ENCODE measurements at regions of chr7 and their contacts with region 1.

Region 1: DNA sequence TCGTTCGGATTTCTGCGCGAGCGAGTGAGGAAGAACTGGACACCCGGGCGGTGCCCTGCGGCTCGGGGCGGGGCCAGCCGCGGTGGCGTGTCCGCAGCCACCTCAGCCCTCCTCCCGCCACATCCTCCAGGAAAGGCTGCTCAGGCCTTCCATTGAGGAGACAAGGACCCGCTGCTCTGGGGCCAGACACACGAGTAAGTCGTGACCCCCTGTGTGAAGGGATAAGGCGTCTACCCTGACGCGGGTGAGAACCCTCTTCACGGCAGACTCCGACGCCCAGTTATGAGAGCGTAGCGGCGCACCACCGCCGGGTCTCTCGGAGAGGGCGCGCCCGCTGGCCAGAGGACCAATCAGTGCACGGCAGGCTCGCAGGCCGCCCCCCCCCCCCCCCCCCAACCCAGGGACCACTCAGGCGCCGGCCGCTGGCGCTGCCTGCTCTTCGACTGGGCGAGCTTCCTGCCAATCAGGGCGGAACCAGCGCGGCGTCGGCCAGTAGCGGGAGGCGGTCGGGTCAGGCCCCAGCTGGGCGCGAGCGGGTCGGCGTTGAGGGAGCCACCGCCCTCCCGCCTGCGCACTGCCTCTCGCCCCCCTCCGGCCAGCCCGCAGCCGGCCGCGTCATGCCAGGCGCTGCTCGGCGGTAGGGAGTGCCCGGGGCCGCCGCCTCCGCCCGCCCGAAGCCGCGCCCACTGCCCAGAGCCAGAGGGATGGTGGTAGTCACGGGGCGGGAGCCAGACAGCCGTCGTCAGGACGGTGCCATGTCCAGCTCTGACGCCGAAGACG is at the start of gene KCTD7:
- DNase-seq: peak; percentile 99
- H3K4me3 ChIP-seq: peak within 1 kb of the TSS; percentile 64 to 90 (median 72)
- H3K27ac ChIP-seq: peak within 1 kb of the TSS; percentile 95 to 97 (median 96)
- H3K4me1 ChIP-seq: peaks cover 0 to 48% (median 36%) of the 10 kb centered on the region in 4 donors
- H3K27me3 ChIP-seq: no peaks in the 10 kb centered on the region
- CTCF ChIP-seq: no peak
- EP300 ChIP-seq: no peak
- POLR2A ChIP-seq: peak; percentile 98 to 99
- total RNA-seq, gene KCTD7: 15.3 to 23.3 (median 19.6) TPM

Region 2: DNA sequence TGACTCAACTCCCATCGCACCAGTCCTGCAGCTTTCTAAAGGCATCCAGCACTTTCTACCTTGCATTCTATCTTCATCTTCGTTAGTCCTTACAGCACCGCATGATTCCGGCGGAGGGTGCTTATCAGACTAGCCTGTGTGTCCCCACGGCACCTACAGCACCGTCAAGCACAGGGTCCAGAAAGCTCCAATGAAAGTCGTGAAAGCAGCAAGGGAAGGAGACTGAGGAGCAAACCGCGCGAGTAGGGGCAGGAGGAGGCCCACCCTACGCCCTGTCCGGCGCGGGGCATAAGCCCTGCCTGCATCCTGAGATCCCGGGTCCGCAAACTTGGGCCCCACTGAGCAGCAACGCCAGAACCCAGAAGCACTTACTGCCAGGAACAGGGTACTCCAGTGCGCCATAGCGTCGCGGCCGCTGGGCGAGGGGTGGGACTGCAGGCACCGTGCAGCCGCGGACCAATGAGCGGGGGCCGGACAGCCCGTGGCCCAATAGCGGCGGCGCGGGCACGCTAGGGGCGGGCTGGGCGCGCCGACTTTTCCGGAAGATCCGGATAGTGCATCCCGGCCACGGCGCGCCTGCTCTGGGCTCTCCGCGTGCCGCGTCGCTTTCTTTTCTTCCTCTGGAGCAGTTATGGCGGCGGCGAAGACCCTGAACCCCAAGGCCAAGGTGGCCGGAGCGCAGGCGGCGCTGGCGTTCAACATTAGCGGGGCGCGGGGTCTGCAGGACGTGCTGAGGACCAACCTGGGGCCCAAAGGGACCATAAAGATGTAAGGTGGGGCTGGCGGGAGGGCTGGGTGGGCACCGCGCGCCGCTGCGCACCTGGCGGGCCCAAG is 877.8 kb before region 1 on chr7:
- intact Hi-C with region 1: loop called (anchors 5 kb)
- DNase-seq: peak; percentile 95
- H3K4me3 ChIP-seq: peak overlapping the region; percentile 84 to 100 (median 92)
- H3K27ac ChIP-seq: peak overlapping the region; percentile 94 to 100 (median 97)
- H3K4me1 ChIP-seq: peaks cover 0 to 66% (median 53%) of the 10 kb centered on the region in 4 donors
- H3K27me3 ChIP-seq: no peaks in the 10 kb centered on the region
- CTCF ChIP-seq: peak in 3 of 4 experiments; percentile 24 to 38 (median 32)
- EP300 ChIP-seq: no peak
- POLR2A ChIP-seq: peak; percentile 61 to 71

Region 3: DNA sequence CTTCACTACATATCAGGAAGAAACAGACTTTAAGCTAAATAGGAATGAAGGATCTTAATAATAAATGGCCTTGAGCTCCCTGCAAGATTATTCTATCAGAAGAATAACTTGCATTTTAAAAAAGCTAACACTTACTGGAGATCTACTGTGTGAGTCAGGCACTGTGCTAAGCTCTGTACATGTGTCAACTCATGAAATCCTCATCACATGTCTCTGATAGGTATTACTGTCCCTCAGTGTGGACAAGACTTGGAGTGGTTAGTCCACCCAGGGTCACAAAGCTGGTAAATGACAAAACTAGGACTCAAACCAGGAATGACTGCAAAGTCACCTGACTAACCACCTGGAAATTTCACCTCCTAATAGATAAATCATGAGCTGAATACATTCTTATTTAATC is 57.0 kb before region 1 on chr7:
- intact Hi-C with region 1: no loop called
- DNase-seq: no peak
- H3K4me3 ChIP-seq: no peak overlapping the region
- H3K27ac ChIP-seq: no peak overlapping the region
- H3K4me1 ChIP-seq: peaks cover 0 to 8% (median 6%) of the 10 kb centered on the region in 4 donors
- H3K27me3 ChIP-seq: no peaks in the 10 kb centered on the region
- CTCF ChIP-seq: no peak
- EP300 ChIP-seq: no peak
- POLR2A ChIP-seq: no peak

Region 4: GRCh38 chr7:66591799-66592596 is 36.6 kb before region 1 on chr7:
- intact Hi-C with region 1: loop called (anchors 1 kb)
- DNase-seq: peak; percentile 97
- H3K4me3 ChIP-seq: peak overlapping the region; percentile 71 to 94 (median 87)
- H3K27ac ChIP-seq: peak overlapping the region; percentile 93 to 99 (median 96)
- H3K4me1 ChIP-seq: peaks cover 0 to 46% (median 42%) of the 10 kb centered on the region in 4 donors
- H3K27me3 ChIP-seq: no peaks in the 10 kb centered on the region
- CTCF ChIP-seq: no peak
- EP300 ChIP-seq: peak in 2 of 4 donors; percentile 20 to 56
- POLR2A ChIP-seq: peak; percentile 97 to 98

Region 5: GRCh38 chr7:66617295-66617694 is 11.3 kb before region 1 on chr7:
- intact Hi-C with region 1: loop called (anchors 1 kb)
- DNase-seq: peak; percentile 86
- H3K4me3 ChIP-seq: no peak overlapping the region
- H3K27ac ChIP-seq: peak overlapping the region in 3 of 4 donors; percentile 74 to 82 (median 76)
- H3K4me1 ChIP-seq: peaks cover 0 to 28% (median 5%) of the 10 kb centered on the region in 4 donors
- H3K27me3 ChIP-seq: no peaks in the 10 kb centered on the region
- CTCF ChIP-seq: no peak
- EP300 ChIP-seq: peak; percentile 52 to 96 (median 90)
- POLR2A ChIP-seq: no peak